ENCODE measurements at regions of chr9 and their contacts with region 1.

Region 1: DNA sequence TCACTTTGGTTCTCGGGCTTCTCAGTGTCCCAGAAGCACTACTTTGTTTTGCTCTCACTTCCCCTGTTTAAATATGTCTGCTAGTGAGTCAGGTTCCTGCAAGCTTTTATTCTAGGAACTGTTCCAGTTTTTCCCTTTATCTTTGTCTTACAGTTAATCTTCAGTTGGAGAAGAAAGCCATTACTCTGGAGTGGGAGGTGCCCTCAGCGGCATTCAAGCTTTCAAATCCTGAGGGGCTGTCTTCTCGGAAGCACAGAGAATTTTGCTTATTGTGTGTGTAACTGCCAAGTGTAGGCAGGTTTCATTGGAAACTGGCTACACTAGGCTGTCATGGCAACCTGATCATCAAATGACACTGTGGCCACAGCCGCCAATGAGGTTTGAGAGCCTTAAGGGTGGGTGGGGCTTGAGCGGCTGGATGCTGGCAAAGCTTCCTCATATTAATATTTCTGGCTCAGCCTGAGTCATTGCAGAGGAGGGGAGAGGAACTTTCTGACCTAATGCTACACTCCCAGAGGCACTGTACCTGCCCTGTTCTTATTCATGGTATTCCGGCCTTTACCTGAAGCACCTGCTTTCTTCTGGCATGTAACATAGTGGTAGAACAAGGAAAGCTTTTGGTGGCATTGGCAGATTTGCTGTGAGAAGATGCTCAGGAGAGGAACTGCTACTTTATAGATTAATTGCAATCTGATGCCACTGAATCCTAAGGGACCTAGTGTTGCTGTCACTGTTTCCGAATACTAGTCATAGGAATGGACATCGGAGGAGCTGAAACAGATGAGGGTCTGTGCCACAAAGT is 26.3 kb downstream of the SLC25A25 start:
- DNase-seq: peak; percentile 99
- H3K4me3 ChIP-seq: peak overlapping the region in 2 of 3 experiments; percentile 15 to 34
- H3K27ac ChIP-seq: peak overlapping the region; percentile 98
- H3K4me1 ChIP-seq: peaks cover 39% of the 10 kb centered on the region
- H3K27me3 ChIP-seq: no peaks in the 10 kb centered on the region
- CTCF ChIP-seq: no peak

Region 2: DNA sequence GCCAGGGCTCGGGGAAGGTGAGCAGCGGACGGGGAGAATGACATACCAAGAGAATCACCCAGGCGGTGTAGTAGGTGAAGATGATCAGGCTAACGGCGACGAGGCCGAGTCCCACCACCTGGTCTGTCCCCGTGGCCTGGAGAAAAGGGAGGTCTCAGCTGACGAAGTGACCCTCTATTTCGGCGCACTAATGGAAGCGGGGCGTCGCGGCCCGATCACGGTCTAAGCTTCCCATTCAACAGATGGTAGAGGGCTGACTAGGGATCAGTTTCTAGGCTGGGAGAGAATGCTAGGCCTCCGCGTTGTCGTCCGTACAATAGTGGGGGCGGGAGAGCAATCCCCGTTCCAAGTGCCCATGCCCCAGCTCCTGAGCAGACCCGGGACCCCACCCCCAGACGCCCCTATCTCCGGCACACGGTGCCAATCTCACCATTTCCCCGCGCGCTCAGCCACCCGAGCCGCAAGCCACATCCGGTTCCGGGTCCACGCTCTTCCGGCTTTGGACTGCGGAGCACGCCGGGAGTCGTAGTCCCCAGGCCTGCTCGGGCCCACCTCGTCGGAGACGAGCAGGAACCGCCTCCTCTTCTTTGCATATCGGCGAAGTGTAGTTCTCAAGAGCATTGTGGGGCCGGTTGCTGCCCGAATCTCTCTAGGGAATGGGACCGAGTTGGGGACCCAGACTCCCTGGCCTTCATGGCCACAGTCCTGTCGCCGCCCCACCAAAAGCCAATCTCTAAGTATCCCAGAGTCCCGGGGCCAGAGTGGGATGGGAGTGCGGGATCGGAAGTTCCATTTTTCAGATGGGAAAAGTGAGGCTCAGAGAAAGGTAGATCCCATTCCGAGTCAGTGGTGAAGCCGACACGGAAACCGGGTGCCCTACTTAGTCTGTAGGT is 156.7 kb before region 1 on chr9 and contains the start of gene DPM2:
- CTCF ChIA-PET with region 1: no interaction called
- dilution Hi-C with region 1: no loop called
- in situ Hi-C with region 1: loop called in 1 of 2 experiments (anchors 5 kb)
- intact Hi-C with region 1: no loop called
- DNase-seq: peak; percentile 78
- H3K4me3 ChIP-seq: peak within 1 kb of the TSS; percentile 60 to 89 (median 73)
- H3K27ac ChIP-seq: peak within 1 kb of the TSS; percentile 60
- H3K4me1 ChIP-seq: peaks cover 23% of the 10 kb centered on the region
- H3K27me3 ChIP-seq: no peaks in the 10 kb centered on the region
- CTCF ChIP-seq: no peak
- total RNA-seq, gene DPM2: 10.0 to 48.7 TPM

Region 3: DNA sequence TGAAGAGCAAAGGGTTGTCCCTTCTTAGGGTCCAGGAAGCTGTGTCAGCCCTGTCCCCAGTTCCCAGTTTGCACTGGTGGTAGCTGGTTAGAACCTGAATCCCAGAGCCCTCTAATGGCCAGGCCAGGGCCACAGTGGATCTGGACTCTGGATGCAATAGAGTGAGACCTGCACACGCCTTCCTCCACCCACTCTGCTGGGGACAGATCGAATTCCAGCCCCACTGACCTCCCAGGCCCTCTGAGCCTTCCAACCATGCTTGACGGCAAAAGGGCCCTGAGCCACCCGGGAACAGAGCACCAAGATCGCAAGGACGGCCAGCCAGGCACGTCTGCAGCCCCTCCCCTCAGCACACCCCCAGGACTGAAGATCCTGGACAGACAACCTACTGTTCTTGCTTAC is 50.9 kb before region 1 on chr9:
- CTCF ChIA-PET with region 1: no interaction called
- dilution Hi-C with region 1: loop called (anchors 5 kb)
- in situ Hi-C with region 1: no loop called
- intact Hi-C with region 1: no loop called
- DNase-seq: no peak
- H3K4me3 ChIP-seq: no peak overlapping the region
- H3K27ac ChIP-seq: no peak overlapping the region
- H3K4me1 ChIP-seq: no peaks in the 10 kb centered on the region
- H3K27me3 ChIP-seq: no peaks in the 10 kb centered on the region
- CTCF ChIP-seq: no peak

Region 4: DNA sequence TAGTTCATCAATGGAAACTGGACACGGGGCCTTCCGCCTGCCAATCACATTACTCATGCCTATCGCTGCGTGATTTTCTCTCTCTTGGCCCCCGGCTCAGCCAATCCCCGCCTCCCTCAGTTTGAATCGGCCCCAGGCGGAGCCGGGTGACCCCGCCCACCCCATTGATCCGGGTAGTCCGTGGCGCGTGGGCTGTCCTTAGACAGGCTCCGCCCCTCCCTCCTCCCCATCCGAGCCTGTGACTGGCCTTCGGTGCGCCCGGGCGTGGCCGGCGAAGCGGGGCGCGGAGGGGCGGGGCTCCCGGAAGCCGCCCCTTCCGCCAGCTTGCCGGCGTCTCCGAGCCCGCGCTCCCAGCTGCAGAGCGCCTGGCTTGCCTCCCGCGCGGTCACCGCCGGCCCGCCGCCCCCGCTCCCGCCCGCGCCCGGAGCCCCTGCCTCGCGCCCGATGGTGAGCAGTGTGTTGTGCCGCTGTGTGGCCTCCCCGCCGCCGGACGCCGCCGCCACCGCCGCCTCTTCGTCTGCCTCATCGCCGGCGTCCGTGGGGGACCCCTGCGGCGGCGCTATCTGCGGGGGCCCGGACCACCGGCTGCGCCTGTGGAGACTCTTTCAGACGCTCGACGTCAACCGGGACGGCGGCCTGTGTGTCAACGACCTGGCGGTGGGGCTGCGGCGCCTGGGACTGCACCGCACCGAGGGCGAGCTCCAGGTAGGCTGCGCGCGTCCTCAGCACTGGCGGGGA is 26.3 kb before region 1 on chr9 and contains the start of gene SLC25A25:
- CTCF ChIA-PET with region 1: interaction called, 3 read pairs
- dilution Hi-C with region 1: no loop called
- in situ Hi-C with region 1: no loop called
- intact Hi-C with region 1: loop called (anchors 1 kb)
- DNase-seq: peak; percentile 98
- H3K4me3 ChIP-seq: peak within 1 kb of the TSS; percentile 74 to 83 (median 82)
- H3K27ac ChIP-seq: peak within 1 kb of the TSS; percentile 99
- H3K4me1 ChIP-seq: peaks cover 21% of the 10 kb centered on the region
- H3K27me3 ChIP-seq: no peaks in the 10 kb centered on the region
- CTCF ChIP-seq: no peak
- total RNA-seq, gene SLC25A25: 10.8 to 12.8 TPM

Region 5: GRCh38 chr9:128149001-128149701 is 54.8 kb after region 1 on chr9 and contains the start of gene LCN2:
- CTCF ChIA-PET with region 1: no interaction called
- dilution Hi-C with region 1: loop called (anchors 5 kb)
- in situ Hi-C with region 1: no loop called
- intact Hi-C with region 1: no loop called
- DNase-seq: peak; percentile 90
- H3K4me3 ChIP-seq: peak within 1 kb of the TSS in 1 of 3 experiments; percentile 12
- H3K27ac ChIP-seq: no peak within 1 kb of the TSS
- H3K4me1 ChIP-seq: peaks cover 20% of the 10 kb centered on the region
- H3K27me3 ChIP-seq: no peaks in the 10 kb centered on the region
- CTCF ChIP-seq: no peak
- total RNA-seq, gene LCN2: 6.5 to 20.0 TPM

Region 6: DNA sequence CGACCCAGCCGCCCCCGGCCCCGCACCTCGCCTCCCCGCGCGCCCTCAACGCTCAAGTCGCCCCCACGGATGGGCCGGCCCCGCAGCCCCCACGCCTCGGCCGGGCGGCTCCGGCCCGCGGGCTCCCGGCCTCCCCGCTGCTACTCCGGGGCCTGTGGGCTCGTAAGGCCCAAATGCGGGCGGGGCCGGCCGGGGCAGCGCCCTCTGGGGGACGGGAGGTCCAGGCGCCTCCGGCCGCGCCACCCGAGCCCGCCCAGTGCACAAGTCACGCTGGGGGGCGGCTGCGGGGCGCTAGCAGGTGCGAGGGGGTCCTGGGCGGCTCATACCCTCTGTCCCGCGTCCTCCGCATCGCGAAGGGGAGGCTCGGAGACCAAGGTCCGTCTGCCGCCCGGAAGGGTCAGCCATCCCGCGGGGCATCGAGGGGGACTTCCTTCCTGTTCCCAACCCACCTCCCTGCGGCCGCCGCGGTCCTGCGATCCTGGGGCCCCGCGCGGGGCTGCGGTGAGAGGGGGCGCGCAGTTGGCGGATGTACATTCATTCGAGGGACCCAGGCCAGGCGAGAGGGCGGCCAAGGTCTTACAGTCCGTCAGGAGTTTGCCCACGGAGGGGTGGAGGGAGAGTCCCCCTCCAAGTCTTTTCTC is 97.2 kb after region 1 on chr9 and contains the start of gene CIZ1:
- CTCF ChIA-PET with region 1: no interaction called
- dilution Hi-C with region 1: no loop called
- in situ Hi-C with region 1: no loop called
- intact Hi-C with region 1: no loop called
- DNase-seq: peak; percentile 63
- H3K4me3 ChIP-seq: peak within 1 kb of the TSS; percentile 84 to 90 (median 88)
- H3K27ac ChIP-seq: peak within 1 kb of the TSS; percentile 26
- H3K4me1 ChIP-seq: peaks cover 19% of the 10 kb centered on the region
- H3K27me3 ChIP-seq: no peaks in the 10 kb centered on the region
- CTCF ChIP-seq: peak; percentile 41 to 72
- total RNA-seq, gene CIZ1: 36.0 to 109 TPM